PC-9 (cell line): ENCODE measurements at regions of chr11 and their contacts with region 1.

Region 1: GRCh38 chr11:42770444-42771065 is 541.2 kb upstream of the API5 start:
- DNase-seq: no peak
- H3K4me3 ChIP-seq: no peak overlapping the region
- H3K27ac ChIP-seq: no peak overlapping the region
- H3K4me1 ChIP-seq: no peaks in the 10 kb centered on the region
- H3K27me3 ChIP-seq: no peaks in the 10 kb centered on the region
- CTCF ChIP-seq: peak; percentile 79

Region 2: GRCh38 chr11:42154655-42155054 is 615.9 kb before region 1 on chr11:
- CTCF ChIA-PET with region 1: no interaction called
- POLR2A ChIA-PET with region 1: no interaction called
- intact Hi-C with region 1: no loop called
- DNase-seq: no peak
- H3K4me3 ChIP-seq: no peak overlapping the region
- H3K27ac ChIP-seq: no peak overlapping the region
- H3K4me1 ChIP-seq: no peaks in the 10 kb centered on the region
- H3K27me3 ChIP-seq: no peaks in the 10 kb centered on the region
- CTCF ChIP-seq: no peak

Region 3: DNA sequence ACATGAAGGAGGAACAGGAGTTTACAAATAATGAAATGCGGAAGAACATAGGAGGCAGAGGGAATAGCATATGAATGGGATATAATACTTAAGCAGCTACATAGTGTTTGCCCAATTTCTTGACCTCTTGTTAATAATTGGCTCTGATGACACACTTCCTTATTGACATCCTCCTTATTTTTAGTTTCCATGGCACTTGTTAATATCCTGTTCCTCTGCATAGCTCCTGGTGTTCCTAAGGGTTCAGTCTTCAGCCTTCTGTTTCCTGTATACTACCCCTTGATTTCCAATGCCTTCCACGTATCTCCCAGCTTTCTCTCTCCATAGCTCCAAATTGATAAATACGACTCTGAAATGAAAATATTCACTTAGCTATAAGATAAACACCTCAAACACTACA is 122.6 kb before region 1 on chr11:
- CTCF ChIA-PET with region 1: no interaction called
- POLR2A ChIA-PET with region 1: no interaction called
- intact Hi-C with region 1: no loop called
- DNase-seq: no peak
- H3K4me3 ChIP-seq: no peak overlapping the region
- H3K27ac ChIP-seq: no peak overlapping the region
- H3K4me1 ChIP-seq: no peaks in the 10 kb centered on the region
- H3K27me3 ChIP-seq: no peaks in the 10 kb centered on the region; the same call in 1 of the 2 replicates
- CTCF ChIP-seq: no peak

Region 4: GRCh38 chr11:43278193-43278956 is 507.8 kb after region 1 on chr11:
- CTCF ChIA-PET with region 1: no interaction called
- POLR2A ChIA-PET with region 1: no interaction called
- intact Hi-C with region 1: loop called (anchors 1 kb)
- DNase-seq: peak in 1 of 2 experiments; percentile 49
- H3K4me3 ChIP-seq: no peak overlapping the region
- H3K27ac ChIP-seq: no peak overlapping the region
- H3K4me1 ChIP-seq: no peaks in the 10 kb centered on the region
- H3K27me3 ChIP-seq: peaks cover 83% of the 10 kb centered on the region
- CTCF ChIP-seq: peak; percentile 67